CD4-positive, alpha-beta memory T cell (primary cell): ENCODE measurements at regions of chr3 and their contacts with region 1.

Region 1: GRCh38 chr3:152281133-152281713 is 12.5 kb downstream of the MBNL1 start:
- DNase-seq: no peak
- H3K4me3 ChIP-seq: no peak overlapping the region
- H3K4me3 Mint-ChIP-seq: peak overlapping the region; percentile 15 to 87 (median 70)
- H3K27ac ChIP-seq: peak overlapping the region; percentile 61
- H3K27ac Mint-ChIP-seq: peak overlapping the region; percentile 62 to 88 (median 76)
- H3K4me1 ChIP-seq: peaks cover 97% of the 10 kb centered on the region
- H3K4me1 Mint-ChIP-seq: peaks cover 61 to 85% (median 72%) of the 10 kb centered on the region in 4 donors
- H3K27me3 ChIP-seq: no peaks in the 10 kb centered on the region
- H3K27me3 Mint-ChIP-seq: no peaks in the 10 kb centered on the region

Region 2: GRCh38 chr3:151925876-151926275 is 355.3 kb before region 1 on chr3:
- CTCF ChIA-PET with region 1: no interaction called
- POLR2A ChIA-PET with region 1: no interaction called
- intact Hi-C with region 1: no loop called
- DNase-seq: no peak
- H3K4me3 ChIP-seq: no peak overlapping the region
- H3K4me3 Mint-ChIP-seq: no peak overlapping the region
- H3K27ac ChIP-seq: no peak overlapping the region
- H3K27ac Mint-ChIP-seq: no peak overlapping the region
- H3K4me1 ChIP-seq: no peaks in the 10 kb centered on the region
- H3K4me1 Mint-ChIP-seq: no peaks in the 10 kb centered on the region
- H3K27me3 ChIP-seq: no peaks in the 10 kb centered on the region
- H3K27me3 Mint-ChIP-seq: peaks cover 0 to 3% of the 10 kb centered on the region in 2 donors

Region 3: GRCh38 chr3:152258448-152259393 is 22.5 kb before region 1 on chr3:
- CTCF ChIA-PET with region 1: no interaction called
- POLR2A ChIA-PET with region 1: interaction called, 23 read pairs
- intact Hi-C with region 1: no loop called
- DNase-seq: peak in 4 of 5 donors; percentile 56 to 94 (median 62)
- H3K4me3 ChIP-seq: peak overlapping the region in 1 of 2 donors; percentile 37
- H3K4me3 Mint-ChIP-seq: peak overlapping the region; percentile 74 to 92 (median 80)
- H3K27ac ChIP-seq: peak overlapping the region; percentile 75
- H3K27ac Mint-ChIP-seq: peak overlapping the region; percentile 91 to 96 (median 94)
- H3K4me1 ChIP-seq: peaks cover 96% of the 10 kb centered on the region
- H3K4me1 Mint-ChIP-seq: peaks cover 78 to 92% (median 85%) of the 10 kb centered on the region in 4 donors
- H3K27me3 ChIP-seq: no peaks in the 10 kb centered on the region
- H3K27me3 Mint-ChIP-seq: no peaks in the 10 kb centered on the region

Region 4: GRCh38 chr3:152291649-152292066 is 10.4 kb after region 1 on chr3:
- CTCF ChIA-PET with region 1: interaction called, 5 read pairs
- POLR2A ChIA-PET with region 1: interaction called, 206 read pairs
- intact Hi-C with region 1: loop called (anchors 1 kb)
- DNase-seq: no peak
- H3K4me3 ChIP-seq: peak overlapping the region in 1 of 2 donors; percentile 4
- H3K4me3 Mint-ChIP-seq: peak overlapping the region; percentile 33 to 86 (median 68)
- H3K27ac ChIP-seq: peak overlapping the region; percentile 36
- H3K27ac Mint-ChIP-seq: peak overlapping the region; percentile 50 to 89 (median 80)
- H3K4me1 ChIP-seq: peaks cover 97% of the 10 kb centered on the region
- H3K4me1 Mint-ChIP-seq: peaks cover 55 to 82% (median 73%) of the 10 kb centered on the region in 4 donors
- H3K27me3 ChIP-seq: no peaks in the 10 kb centered on the region
- H3K27me3 Mint-ChIP-seq: no peaks in the 10 kb centered on the region

Region 5: GRCh38 chr3:152969561-152970240 is 688.5 kb after region 1 on chr3:
- CTCF ChIA-PET with region 1: no interaction called
- POLR2A ChIA-PET with region 1: no interaction called
- intact Hi-C with region 1: no loop called
- DNase-seq: no peak
- H3K4me3 ChIP-seq: no peak overlapping the region
- H3K4me3 Mint-ChIP-seq: no peak overlapping the region
- H3K27ac ChIP-seq: no peak overlapping the region
- H3K27ac Mint-ChIP-seq: no peak overlapping the region
- H3K4me1 ChIP-seq: no peaks in the 10 kb centered on the region
- H3K4me1 Mint-ChIP-seq: no peaks in the 10 kb centered on the region
- H3K27me3 ChIP-seq: no peaks in the 10 kb centered on the region
- H3K27me3 Mint-ChIP-seq: peaks cover 0 to 5% of the 10 kb centered on the region in 2 donors